CD8-positive, alpha-beta T cell (primary cell): ENCODE measurements at regions of chr22 and their contacts with region 1.

Region 1: GRCh38 chr22:17761138-17761488 is 13.2 kb downstream of the BID start:
- DNase-seq: no peak
- ATAC-seq: no peak
- H3K4me3 ChIP-seq: no peak overlapping the region
- H3K4me3 Mint-ChIP-seq: no peak overlapping the region
- H3K27ac ChIP-seq: no peak overlapping the region
- H3K27ac Mint-ChIP-seq: peak overlapping the region; percentile 27
- H3K4me1 ChIP-seq: peaks cover 7% of the 10 kb centered on the region
- H3K4me1 Mint-ChIP-seq: peaks cover 32% of the 10 kb centered on the region
- H3K27me3 ChIP-seq: no peaks in the 10 kb centered on the region
- H3K27me3 Mint-ChIP-seq: no peaks in the 10 kb centered on the region
- CTCF ChIP-seq: no peak

Region 2: DNA sequence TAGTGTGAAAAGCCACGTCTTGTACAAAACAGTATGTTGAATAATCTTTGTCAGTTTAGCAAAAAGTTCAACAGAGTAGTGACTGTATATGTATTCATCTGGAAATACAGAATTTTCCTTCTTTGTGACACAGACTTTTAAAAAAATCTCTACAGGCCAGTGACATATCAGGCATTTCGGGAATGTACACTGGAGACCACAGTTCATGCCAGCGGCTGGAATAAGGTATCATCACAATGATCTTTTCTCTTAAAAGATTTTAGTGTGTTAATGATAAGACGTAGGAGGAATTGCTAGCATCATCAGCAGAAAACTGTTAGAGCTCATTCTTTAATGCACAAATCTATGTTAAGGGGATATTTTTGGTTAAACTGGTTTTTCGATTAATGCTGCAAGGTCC is 65.1 kb before region 1 on chr22:
- CTCF ChIA-PET with region 1: no interaction called
- POLR2A ChIA-PET with region 1: no interaction called
- intact Hi-C with region 1: loop called in 1 of 2 experiments (anchors 2 kb)
- DNase-seq: no peak
- ATAC-seq: no peak
- H3K4me3 ChIP-seq: no peak overlapping the region
- H3K4me3 Mint-ChIP-seq: no peak overlapping the region
- H3K27ac ChIP-seq: no peak overlapping the region
- H3K27ac Mint-ChIP-seq: no peak overlapping the region
- H3K4me1 ChIP-seq: no peaks in the 10 kb centered on the region
- H3K4me1 Mint-ChIP-seq: peaks cover 4% of the 10 kb centered on the region
- H3K27me3 ChIP-seq: no peaks in the 10 kb centered on the region
- H3K27me3 Mint-ChIP-seq: no peaks in the 10 kb centered on the region
- CTCF ChIP-seq: no peak

Region 3: DNA sequence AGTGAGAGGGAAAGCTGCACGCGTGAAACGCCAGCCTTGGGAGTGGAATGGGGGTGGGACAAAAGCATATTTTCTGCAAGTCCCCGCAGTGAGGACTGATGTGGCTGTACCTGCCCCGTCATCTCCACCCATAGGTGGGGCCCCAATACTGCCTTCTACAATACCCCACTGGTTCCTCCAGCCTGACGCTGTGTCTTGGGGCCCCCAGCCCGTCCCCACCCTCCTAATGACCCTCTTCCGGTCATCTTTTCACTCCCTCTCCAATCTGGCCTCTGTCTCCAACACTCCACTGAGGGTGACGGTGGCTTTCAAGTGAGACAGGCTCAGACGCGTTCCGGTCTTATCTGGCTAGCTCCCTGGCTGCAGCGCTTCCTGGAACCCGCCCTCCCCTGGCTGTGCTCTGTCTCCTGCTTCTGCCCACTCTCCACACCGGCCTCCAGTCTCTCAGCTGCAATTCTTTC is 159.1 kb after region 1 on chr22:
- CTCF ChIA-PET with region 1: no interaction called
- POLR2A ChIA-PET with region 1: no interaction called
- intact Hi-C with region 1: no loop called
- DNase-seq: peak in 1 of 9 experiments; percentile 21
- ATAC-seq: no peak
- H3K4me3 ChIP-seq: no peak overlapping the region
- H3K4me3 Mint-ChIP-seq: no peak overlapping the region
- H3K27ac ChIP-seq: no peak overlapping the region
- H3K27ac Mint-ChIP-seq: no peak overlapping the region
- H3K4me1 ChIP-seq: no peaks in the 10 kb centered on the region
- H3K4me1 Mint-ChIP-seq: peaks cover 11% of the 10 kb centered on the region
- H3K27me3 ChIP-seq: no peaks in the 10 kb centered on the region
- H3K27me3 Mint-ChIP-seq: no peaks in the 10 kb centered on the region
- CTCF ChIP-seq: no peak